ENCODE measurements at regions of chr11 and their contacts with region 1.

Region 1: GRCh38 chr11:70811915-70812314 is 413.6 kb downstream of the CTTN start:
- DNase-seq: no peak
- H3K4me3 ChIP-seq: no peak overlapping the region
- H3K27ac ChIP-seq: no peak overlapping the region
- H3K4me1 ChIP-seq: no peaks in the 10 kb centered on the region
- H3K27me3 ChIP-seq: no peaks in the 10 kb centered on the region
- CTCF ChIP-seq: no peak
- EP300 ChIP-seq: no peak
- POLR2A ChIP-seq: no peak

Region 2: GRCh38 chr11:70524083-70524922 is 287.6 kb before region 1 on chr11:
- in situ Hi-C with region 1: no loop called
- intact Hi-C with region 1: no loop called
- DNase-seq: no peak
- H3K4me3 ChIP-seq: no peak overlapping the region
- H3K27ac ChIP-seq: no peak overlapping the region
- H3K4me1 ChIP-seq: no peaks in the 10 kb centered on the region
- H3K27me3 ChIP-seq: no peaks in the 10 kb centered on the region
- CTCF ChIP-seq: no peak
- EP300 ChIP-seq: no peak
- POLR2A ChIP-seq: no peak

Region 3: GRCh38 chr11:70772950-70773349 is 39.0 kb before region 1 on chr11:
- in situ Hi-C with region 1: no loop called
- intact Hi-C with region 1: no loop called
- DNase-seq: no peak
- H3K4me3 ChIP-seq: no peak overlapping the region
- H3K27ac ChIP-seq: no peak overlapping the region
- H3K4me1 ChIP-seq: no peaks in the 10 kb centered on the region
- H3K27me3 ChIP-seq: no peaks in the 10 kb centered on the region
- CTCF ChIP-seq: no peak
- EP300 ChIP-seq: no peak
- POLR2A ChIP-seq: no peak

Region 4: DNA sequence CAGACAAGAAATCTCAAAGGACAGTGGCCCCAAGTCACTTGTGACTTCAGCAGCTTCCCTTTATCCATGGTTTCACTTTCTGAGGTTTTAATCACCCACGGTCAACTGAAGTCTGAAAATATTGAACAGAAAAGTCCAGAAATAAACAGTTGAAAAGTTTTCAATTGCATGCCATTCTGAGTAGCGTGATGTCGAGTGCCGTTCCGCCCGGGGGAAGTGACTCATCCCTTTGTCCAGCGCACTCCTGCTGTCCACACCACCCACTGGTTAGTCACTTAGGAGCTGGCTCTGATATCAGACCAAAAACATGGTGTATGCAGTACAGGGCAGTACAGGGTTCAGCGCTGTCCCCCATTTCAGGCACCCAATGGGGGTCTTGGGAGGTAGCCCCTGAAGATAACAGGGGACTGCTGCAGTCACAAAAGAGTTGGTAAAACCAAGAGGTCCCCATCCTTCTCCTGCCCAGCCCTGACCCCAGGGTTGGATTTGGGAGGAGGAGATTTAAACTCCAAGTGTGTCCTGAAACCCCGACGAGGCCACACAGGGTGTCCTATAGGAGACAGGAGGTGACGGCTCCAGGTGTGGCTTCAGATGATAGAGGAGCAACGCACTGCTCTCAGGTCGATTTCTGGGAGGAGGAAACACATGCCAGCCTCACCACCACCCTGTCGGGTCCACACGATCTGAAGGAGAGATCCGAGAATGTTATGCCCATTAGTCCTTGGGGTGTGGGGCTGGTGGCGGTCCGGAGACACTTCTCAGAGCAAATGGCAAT is 23.5 kb before region 1 on chr11:
- in situ Hi-C with region 1: no loop called
- intact Hi-C with region 1: loop called (anchors 1 kb)
- DNase-seq: no peak
- H3K4me3 ChIP-seq: no peak overlapping the region
- H3K27ac ChIP-seq: no peak overlapping the region
- H3K4me1 ChIP-seq: peaks cover 0 to 16% (median 8%) of the 10 kb centered on the region in 4 donors
- H3K27me3 ChIP-seq: no peaks in the 10 kb centered on the region
- CTCF ChIP-seq: no peak
- EP300 ChIP-seq: no peak
- POLR2A ChIP-seq: no peak

Region 5: GRCh38 chr11:71096751-71097388 is 285.0 kb after region 1 on chr11:
- in situ Hi-C with region 1: no loop called
- intact Hi-C with region 1: no loop called
- DNase-seq: no peak
- H3K4me3 ChIP-seq: no peak overlapping the region
- H3K27ac ChIP-seq: no peak overlapping the region
- H3K4me1 ChIP-seq: no peaks in the 10 kb centered on the region
- H3K27me3 ChIP-seq: no peaks in the 10 kb centered on the region
- CTCF ChIP-seq: no peak
- EP300 ChIP-seq: no peak
- POLR2A ChIP-seq: no peak

Measured in transverse colon (tissue), 4 donors.